HCT116 (cell line): ENCODE measurements at regions of chr1 and their contacts with region 1.

Region 1: GRCh38 chr1:155044812-155045690 is 6.1 kb upstream of the ADAM15 start:
- DNase-seq: no peak
- ATAC-seq: peak; percentile 95
- H3K4me3 ChIP-seq: no peak overlapping the region
- H3K27ac ChIP-seq: no peak overlapping the region
- H3K4me1 ChIP-seq: peaks cover 15 to 33% of the 10 kb centered on the region in 2 experiments
- H3K27me3 ChIP-seq: no peaks in the 10 kb centered on the region
- CTCF ChIP-seq: peak in 2 of 3 experiments; percentile 77 to 80; a peak in 4 of 6 replicates
- POLR2A ChIP-seq: no peak
- RAD21 ChIP-seq: no peak

Region 2: DNA sequence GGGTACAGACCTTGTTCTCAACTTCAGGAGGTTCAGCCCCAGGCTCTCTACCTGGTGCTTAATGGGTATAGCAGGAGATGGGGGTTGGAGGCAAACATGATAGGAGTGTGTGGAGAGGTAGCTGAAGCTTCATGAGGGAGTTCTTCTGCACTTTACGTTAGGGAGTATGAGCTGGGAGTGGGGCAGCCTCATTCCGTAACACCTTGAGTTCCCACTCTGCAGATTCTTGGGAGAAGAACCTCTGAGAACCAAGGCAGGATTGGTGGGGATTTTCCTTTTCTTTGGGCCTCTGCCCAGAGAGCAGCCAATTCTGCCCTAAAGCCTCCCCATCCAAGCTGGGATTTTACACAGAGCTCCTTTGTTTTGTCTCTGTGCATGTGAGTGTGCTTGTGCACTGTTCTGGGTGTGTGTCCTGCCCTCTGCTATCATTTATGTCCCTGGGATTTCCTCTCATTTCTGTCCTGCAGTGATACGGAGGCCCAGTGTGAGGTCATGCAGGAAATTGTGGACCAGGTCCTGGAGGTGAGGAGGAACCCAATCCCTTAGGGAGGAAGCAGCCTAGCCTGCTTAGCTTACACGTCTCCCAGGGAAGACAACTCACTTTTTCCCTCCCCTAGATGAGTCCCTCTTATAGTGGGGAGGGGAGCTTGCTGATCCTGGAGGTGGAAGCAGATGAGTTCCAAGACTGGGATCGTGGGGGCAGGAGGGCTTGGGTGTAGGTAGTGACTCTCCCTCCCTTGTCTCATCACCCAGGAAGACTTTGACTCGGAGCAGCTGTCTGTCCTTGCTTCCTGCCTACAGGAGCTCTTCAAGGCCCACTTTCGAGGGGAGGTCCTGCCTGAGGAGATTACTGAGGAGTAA is 1281.5 kb before region 1 on chr1:
- CTCF ChIA-PET with region 1: no interaction called
- POLR2A ChIA-PET with region 1: no interaction called
- RAD21 ChIA-PET with region 1: no interaction called
- intact Hi-C with region 1: no loop called
- DNase-seq: no peak
- ATAC-seq: no peak
- H3K4me3 ChIP-seq: no peak overlapping the region
- H3K27ac ChIP-seq: no peak overlapping the region
- H3K4me1 ChIP-seq: no peaks in the 10 kb centered on the region
- H3K27me3 ChIP-seq: no peaks in the 10 kb centered on the region
- CTCF ChIP-seq: no peak
- POLR2A ChIP-seq: no peak
- RAD21 ChIP-seq: no peak

Region 3: DNA sequence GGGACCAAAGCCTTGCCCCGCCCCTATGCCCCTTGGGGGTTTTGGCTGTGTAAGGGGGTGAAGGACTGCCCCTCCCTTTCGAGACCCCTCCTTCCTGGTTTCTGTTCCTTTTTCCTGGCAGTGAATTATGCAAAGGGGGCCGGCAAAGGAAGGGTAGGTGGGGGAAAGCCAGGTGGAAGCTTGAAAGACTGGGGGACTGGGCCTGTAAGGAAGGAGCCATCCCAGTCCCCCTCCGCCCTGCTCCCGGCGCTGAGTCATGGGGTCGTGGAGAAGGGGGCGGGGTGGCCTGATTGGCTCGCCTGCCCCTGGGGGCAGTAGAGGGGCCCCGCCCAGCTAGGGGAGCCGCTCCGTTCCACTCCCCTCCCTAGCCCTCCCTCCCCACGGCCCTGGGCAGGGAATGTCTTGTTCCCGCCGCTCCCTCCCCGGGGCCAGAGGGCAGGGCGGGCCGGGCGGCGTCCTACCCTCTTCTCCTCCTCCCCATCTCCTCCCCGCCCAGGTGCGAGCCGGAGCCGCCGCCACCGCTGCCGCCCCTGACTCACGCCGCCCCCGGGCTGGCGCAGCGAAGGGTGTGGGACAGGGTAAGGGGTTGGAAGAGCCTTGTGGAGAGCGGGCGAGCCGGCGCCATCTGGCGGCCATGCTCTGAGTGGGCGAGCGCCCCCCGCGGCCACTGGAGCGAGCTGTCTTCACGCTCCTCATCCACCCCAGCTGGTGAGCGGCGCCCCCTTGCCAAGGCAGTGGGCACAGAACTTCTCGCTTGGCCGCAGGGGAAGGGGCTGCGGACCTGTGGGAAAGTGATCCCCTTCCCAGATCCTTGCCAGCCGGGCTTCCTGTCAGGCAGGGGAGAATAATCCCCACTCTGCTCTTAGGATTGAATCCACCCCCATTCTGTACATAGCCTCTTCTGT is 27.8 kb before region 1 on chr1:
- CTCF ChIA-PET with region 1: interaction called, 24 read pairs
- POLR2A ChIA-PET with region 1: no interaction called
- RAD21 ChIA-PET with region 1: no interaction called
- intact Hi-C with region 1: no loop called
- DNase-seq: peak; percentile 87
- ATAC-seq: peak; percentile 86
- H3K4me3 ChIP-seq: peak overlapping the region; percentile 27 to 47
- H3K27ac ChIP-seq: peak overlapping the region; percentile 89
- H3K4me1 ChIP-seq: peaks cover 30 to 62% of the 10 kb centered on the region in 2 experiments
- H3K27me3 ChIP-seq: no peaks in the 10 kb centered on the region
- CTCF ChIP-seq: peak; percentile 99 to 100 (median 100)
- POLR2A ChIP-seq: no peak
- RAD21 ChIP-seq: peak; percentile 86

Region 4: GRCh38 chr1:155022136-155022926 is 22.7 kb before region 1 on chr1:
- CTCF ChIA-PET with region 1: interaction called, 24 read pairs
- POLR2A ChIA-PET with region 1: no interaction called
- RAD21 ChIA-PET with region 1: no interaction called
- intact Hi-C with region 1: no loop called
- DNase-seq: no peak
- ATAC-seq: no peak
- H3K4me3 ChIP-seq: 0 out of 4 replicates have a peak overlapping the region, but pooled peaks of 1 of the 2 experiments have one; percentile 4
- H3K27ac ChIP-seq: no peak overlapping the region
- H3K4me1 ChIP-seq: peaks cover 37 to 73% of the 10 kb centered on the region in 2 experiments
- H3K27me3 ChIP-seq: no peaks in the 10 kb centered on the region
- CTCF ChIP-seq: no peak
- POLR2A ChIP-seq: no peak
- RAD21 ChIP-seq: no peak

Region 5: DNA sequence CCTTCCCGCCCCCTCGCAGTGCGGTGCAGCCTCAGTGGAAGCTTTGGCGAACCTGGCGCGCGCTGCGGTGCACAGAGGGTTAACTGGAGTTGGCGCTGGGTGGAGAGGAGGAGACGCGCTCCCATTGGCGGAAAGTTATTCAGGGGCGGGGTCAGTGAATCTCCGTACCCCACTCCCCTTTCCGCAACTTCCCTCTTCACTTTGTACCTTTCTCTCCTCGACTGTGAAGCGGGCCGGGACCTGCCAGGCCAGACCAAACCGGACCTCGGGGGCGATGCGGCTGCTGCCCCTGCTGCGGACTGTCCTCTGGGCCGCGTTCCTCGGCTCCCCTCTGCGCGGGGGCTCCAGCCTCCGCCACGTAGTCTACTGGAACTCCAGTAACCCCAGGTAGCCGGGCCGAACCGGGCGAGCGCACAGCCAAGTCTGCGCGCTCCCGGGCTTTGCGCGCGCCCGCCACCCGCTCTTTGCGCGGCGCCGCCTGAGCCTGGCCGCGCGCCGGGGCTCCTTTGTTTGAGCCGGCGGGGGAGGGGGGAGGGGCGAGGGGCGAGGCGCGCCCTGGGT is 18.6 kb after region 1 on chr1 and contains the start of gene EFNA4:
- CTCF ChIA-PET with region 1: interaction called, 15 read pairs
- POLR2A ChIA-PET with region 1: interaction called, 5 read pairs
- RAD21 ChIA-PET with region 1: no interaction called
- intact Hi-C with region 1: no loop called
- DNase-seq: peak; percentile 79
- ATAC-seq: peak; percentile 79
- H3K4me3 ChIP-seq: peak within 1 kb of the TSS; percentile 77 to 84
- H3K27ac ChIP-seq: peak within 1 kb of the TSS; percentile 93
- H3K4me1 ChIP-seq: peaks cover 21 to 35% of the 10 kb centered on the region in 2 experiments
- H3K27me3 ChIP-seq: no peaks in the 10 kb centered on the region
- CTCF ChIP-seq: no peak
- POLR2A ChIP-seq: peak; percentile 76
- RAD21 ChIP-seq: no peak
- total RNA-seq, gene EFNA4: 9.8 TPM